IMR-90 (cell line): ENCODE measurements at regions of chr10 and their contacts with region 1.

Region 1: DNA sequence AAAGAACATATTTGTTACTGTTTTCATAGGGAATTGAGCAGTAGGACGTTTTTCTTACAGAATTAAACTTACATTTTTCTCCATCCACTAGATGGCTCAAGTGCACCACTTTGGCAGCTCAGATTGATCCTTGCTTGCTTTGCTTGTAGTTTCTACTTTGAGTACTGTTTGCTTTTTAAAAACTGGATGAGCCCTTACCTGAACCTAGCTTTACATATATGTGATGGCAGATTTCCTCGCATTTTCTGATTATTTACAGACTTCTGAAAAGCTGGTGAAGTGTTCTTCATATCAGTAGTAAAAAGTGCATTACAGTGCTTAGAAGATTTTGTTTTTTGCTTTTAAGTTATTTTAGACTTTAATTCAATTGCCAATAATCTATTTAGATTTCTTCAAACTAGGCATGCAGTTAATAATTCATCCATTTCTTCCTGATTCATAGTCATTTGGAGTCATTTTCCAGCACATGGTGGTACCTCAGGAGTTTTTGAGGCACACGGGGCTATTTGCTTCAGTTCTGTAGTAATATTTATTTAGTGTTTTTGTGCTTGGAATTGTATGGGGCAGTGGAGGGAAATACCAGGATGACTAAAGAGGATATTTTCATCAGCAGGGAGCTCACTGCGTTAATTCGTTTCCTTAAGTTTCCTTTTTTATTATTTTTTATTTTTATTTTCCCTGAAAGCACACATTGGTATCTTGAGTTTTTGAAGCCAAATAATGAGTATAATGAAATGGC is 57.3 kb downstream of the MAPK8 start:
- DNase-seq: peak; percentile 80
- ATAC-seq: peak; percentile 81
- H3K4me3 ChIP-seq: no peak overlapping the region
- H3K27ac ChIP-seq: no peak overlapping the region
- H3K4me1 ChIP-seq: peaks cover 7% of the 10 kb centered on the region; the same call in 1 of the 2 replicates
- H3K27me3 ChIP-seq: no peaks in the 10 kb centered on the region
- CTCF ChIP-seq: peak; percentile 87
- POLR2A ChIP-seq: no peak
- RAD21 ChIP-seq: peak; percentile 94

Region 2: DNA sequence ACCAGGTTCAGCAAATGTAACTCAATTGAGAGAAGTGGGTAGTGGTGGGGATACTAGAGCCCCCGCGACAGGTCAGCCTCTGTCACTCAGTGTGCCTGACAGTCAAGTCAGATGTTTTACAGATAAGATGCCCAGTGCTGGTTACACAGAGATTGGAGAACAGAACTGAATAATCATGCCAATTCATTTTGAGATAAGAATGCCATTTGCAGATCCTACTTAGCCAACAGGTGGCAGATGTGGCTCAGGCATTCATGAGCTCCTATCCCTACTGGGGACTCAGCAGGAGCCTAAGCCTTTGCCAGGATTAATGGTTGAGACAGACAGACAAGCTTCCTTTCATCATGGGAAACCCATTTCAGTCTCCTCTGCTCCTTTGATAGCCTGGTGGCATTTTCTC is 80.5 kb after region 1 on chr10:
- CTCF ChIA-PET with region 1: no interaction called
- POLR2A ChIA-PET with region 1: no interaction called
- dilution Hi-C with region 1: no loop called
- in situ Hi-C with region 1: no loop called
- intact Hi-C with region 1: loop called (anchors 5 kb)
- DNase-seq: peak; percentile 51
- ATAC-seq: no peak
- H3K4me3 ChIP-seq: no peak overlapping the region
- H3K27ac ChIP-seq: no peak overlapping the region
- H3K4me1 ChIP-seq: peaks cover 11% of the 10 kb centered on the region
- H3K27me3 ChIP-seq: no peaks in the 10 kb centered on the region
- CTCF ChIP-seq: peak; percentile 33
- POLR2A ChIP-seq: no peak
- RAD21 ChIP-seq: peak; percentile 30; the same call in 1 of the 2 replicates

Region 3: GRCh38 chr10:48506147-48506917 is 142.5 kb after region 1 on chr10:
- CTCF ChIA-PET with region 1: interaction called, 4 read pairs
- POLR2A ChIA-PET with region 1: no interaction called
- dilution Hi-C with region 1: no loop called
- in situ Hi-C with region 1: loop called (anchors 25 kb)
- intact Hi-C with region 1: loop called (anchors 1 kb)
- DNase-seq: peak; percentile 56
- ATAC-seq: peak; percentile 71
- H3K4me3 ChIP-seq: no peak overlapping the region
- H3K27ac ChIP-seq: no peak overlapping the region
- H3K4me1 ChIP-seq: peaks cover 14% of the 10 kb centered on the region
- H3K27me3 ChIP-seq: no peaks in the 10 kb centered on the region
- CTCF ChIP-seq: peak; percentile 55
- POLR2A ChIP-seq: no peak
- RAD21 ChIP-seq: peak; percentile 63

Region 4: DNA sequence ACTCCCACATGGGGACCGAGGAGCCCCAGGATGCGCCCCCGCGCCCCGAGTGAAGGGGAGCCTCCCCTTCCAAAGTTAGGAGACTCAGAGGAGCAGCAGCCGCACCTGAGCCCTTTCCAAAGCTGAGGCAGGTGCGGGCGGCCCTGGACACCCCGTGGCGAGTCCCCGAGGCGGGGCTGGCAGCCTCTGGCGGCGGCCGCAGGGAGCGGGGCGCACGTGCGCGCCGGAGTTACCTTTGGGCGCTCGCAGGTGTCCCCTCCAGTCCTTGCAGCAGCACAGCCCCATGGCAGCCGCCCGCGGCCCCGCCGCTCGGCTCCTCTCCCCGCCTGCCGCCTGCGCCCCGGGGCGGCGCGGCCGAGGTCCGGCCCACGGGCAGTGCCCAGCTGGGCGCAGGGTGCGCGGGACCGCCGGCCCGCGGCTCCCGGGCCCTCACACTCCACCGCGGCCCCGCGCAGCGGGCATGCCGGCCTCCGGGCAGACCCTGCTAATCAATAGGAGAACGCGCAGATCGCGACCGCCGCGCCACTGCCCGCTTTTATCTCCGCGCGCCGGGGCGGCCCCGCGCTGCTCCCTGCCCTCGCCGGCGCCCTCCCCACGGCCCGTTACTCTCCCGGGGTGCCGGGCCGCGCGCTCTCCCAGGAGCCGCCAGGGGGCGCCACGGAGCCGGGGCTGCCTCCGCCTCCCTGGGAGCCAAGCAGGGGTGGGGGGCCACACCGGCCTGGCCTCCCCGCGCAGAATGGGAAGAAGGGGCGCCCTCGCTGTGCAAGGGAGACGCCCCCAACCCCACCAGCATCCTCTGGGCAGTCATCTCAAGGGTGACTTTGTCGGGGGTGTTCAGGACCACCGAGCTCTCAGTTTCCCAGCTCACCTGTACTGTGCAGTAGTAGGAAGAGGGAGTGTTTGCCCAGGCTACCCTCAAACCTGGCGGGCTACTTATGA is 160.3 kb after region 1 on chr10:
- CTCF ChIA-PET with region 1: interaction called, 3 read pairs
- POLR2A ChIA-PET with region 1: no interaction called
- dilution Hi-C with region 1: no loop called
- in situ Hi-C with region 1: loop called (anchors 25 kb)
- intact Hi-C with region 1: no loop called
- DNase-seq: no peak
- ATAC-seq: peak; percentile 55
- H3K4me3 ChIP-seq: peak overlapping the region; percentile 42
- H3K27ac ChIP-seq: peak overlapping the region; percentile 15; the same call in 1 of the 2 replicates
- H3K4me1 ChIP-seq: peaks cover 21% of the 10 kb centered on the region
- H3K27me3 ChIP-seq: no peaks in the 10 kb centered on the region
- CTCF ChIP-seq: peak; percentile 59
- POLR2A ChIP-seq: no peak
- RAD21 ChIP-seq: peak; percentile 30

Region 5: DNA sequence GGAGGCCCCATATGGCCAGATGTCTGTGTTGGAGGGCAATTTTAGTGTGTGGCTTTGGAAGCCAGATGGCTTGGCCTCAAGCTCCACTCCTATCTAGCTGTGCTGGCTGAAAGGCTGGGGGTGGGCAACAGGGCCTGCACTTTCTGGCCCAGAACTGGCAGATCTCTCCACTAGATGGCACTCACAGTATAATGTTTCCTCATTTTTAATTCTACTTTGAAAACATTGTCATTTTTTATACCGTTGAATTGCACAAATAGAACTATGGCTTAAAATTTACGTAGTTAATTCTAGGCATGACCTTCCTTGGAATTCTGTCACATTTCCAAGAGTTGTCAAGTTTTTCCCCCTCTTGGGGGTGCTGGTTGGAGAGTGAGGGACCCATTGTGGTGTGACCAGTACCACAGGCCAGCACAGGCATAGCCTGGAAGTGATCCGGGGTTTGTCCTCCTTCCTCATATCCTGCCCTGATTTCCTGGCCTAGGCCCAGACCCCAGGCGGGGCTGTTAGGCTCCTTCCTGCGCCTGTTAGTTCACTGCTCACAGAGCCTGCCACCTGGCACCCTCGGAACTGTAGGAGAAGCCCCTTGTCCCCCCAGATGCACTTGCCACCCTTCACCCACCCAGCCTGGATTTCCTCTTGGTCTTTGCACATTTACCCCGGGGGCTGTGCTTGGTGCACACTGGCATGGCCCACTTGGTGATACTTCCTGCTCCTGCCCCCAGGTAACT is 188.2 kb after region 1 on chr10:
- CTCF ChIA-PET with region 1: interaction called, 3 read pairs
- POLR2A ChIA-PET with region 1: no interaction called
- dilution Hi-C with region 1: no loop called
- in situ Hi-C with region 1: no loop called
- intact Hi-C with region 1: loop called (anchors 1 kb)
- DNase-seq: peak; percentile 59
- ATAC-seq: peak; percentile 88
- H3K4me3 ChIP-seq: no peak overlapping the region
- H3K27ac ChIP-seq: no peak overlapping the region
- H3K4me1 ChIP-seq: no peaks in the 10 kb centered on the region; the same call in 1 of the 2 replicates
- H3K27me3 ChIP-seq: no peaks in the 10 kb centered on the region
- CTCF ChIP-seq: peak; percentile 86
- POLR2A ChIP-seq: 0 out of 2 replicates have a peak, but pooled peaks have one; percentile 28
- RAD21 ChIP-seq: peak; percentile 86

Region 6: DNA sequence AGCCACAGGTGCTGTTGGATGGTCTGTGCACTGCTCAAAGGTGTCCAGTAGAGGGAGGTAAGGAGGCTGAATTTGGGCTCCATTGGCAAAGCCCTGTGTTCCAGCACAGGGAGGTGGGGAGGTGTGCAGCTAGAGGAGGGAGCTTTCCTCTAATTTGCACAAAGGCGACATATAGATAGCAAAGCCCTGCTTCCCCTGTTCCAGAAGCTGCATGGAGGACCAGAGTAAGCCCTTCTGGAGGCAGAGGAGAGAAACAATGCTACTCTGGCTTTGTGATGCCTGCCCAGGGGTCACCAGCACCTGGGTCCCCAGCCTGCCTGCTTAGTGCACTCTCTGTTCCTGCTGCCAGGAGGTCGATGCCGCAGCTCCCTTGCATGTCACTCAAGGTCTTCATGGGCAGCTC is 244.5 kb after region 1 on chr10:
- CTCF ChIA-PET with region 1: interaction called, 4 read pairs
- POLR2A ChIA-PET with region 1: no interaction called
- dilution Hi-C with region 1: no loop called
- in situ Hi-C with region 1: no loop called
- intact Hi-C with region 1: loop called (anchors 5 kb)
- DNase-seq: no peak
- ATAC-seq: no peak
- H3K4me3 ChIP-seq: no peak overlapping the region
- H3K27ac ChIP-seq: peak overlapping the region; percentile 7; the same call in 1 of the 2 replicates
- H3K4me1 ChIP-seq: peaks cover 39% of the 10 kb centered on the region
- H3K27me3 ChIP-seq: no peaks in the 10 kb centered on the region
- CTCF ChIP-seq: peak; percentile 54
- POLR2A ChIP-seq: no peak
- RAD21 ChIP-seq: peak; percentile 30; the same call in 1 of the 2 replicates